K562 (cell line): ENCODE measurements at regions of chr2 and their contacts with region 1.

Region 1: GRCh38 chr2:54704688-54705605 is 18.5 kb upstream of the EML6 start:
- DNase-seq: peak in 2 of 4 experiments; percentile 10 to 60
- ATAC-seq: peak; percentile 86
- H3K4me3 ChIP-seq: no peak overlapping the region
- H3K27ac ChIP-seq: no peak overlapping the region
- H3K4me1 ChIP-seq: peaks cover 3 to 13% of the 10 kb centered on the region in 2 experiments; a peak in 3 of 5 replicates
- H3K27me3 ChIP-seq: peaks cover 18% of the 10 kb centered on the region in 2 experiments; a peak in 4 of 5 replicates
- CTCF ChIP-seq: peak in 2 of 3 experiments; percentile 40 to 72; a peak in 4 of 6 replicates
- EP300 ChIP-seq: no peak
- POLR2A ChIP-seq: no peak
- RAD21 ChIP-seq: peak; percentile 76 to 82

Region 2: GRCh38 chr2:54106631-54107454 is 598.1 kb before region 1 on chr2:
- CTCF ChIA-PET with region 1: no interaction called
- POLR2A ChIA-PET with region 1: no interaction called
- in situ Hi-C with region 1: loop called (anchors 10 kb)
- intact Hi-C with region 1: loop called (anchors 1 kb)
- DNase-seq: peak; percentile 17 to 65 (median 35)
- ATAC-seq: peak; percentile 90
- H3K4me3 ChIP-seq: no peak overlapping the region
- H3K27ac ChIP-seq: no peak overlapping the region
- H3K4me1 ChIP-seq: no peaks in the 10 kb centered on the region; a peak in 2 of 5 replicates
- H3K27me3 ChIP-seq: no peaks in the 10 kb centered on the region
- CTCF ChIP-seq: peak; percentile 70 to 79 (median 73)
- EP300 ChIP-seq: no peak
- POLR2A ChIP-seq: no peak
- RAD21 ChIP-seq: peak; percentile 71 to 77

Region 3: GRCh38 chr2:54115284-54116137 is 589.4 kb before region 1 on chr2 and contains the start of gene ACYP2:
- CTCF ChIA-PET with region 1: no interaction called
- POLR2A ChIA-PET with region 1: no interaction called
- in situ Hi-C with region 1: loop called (anchors 10 kb)
- intact Hi-C with region 1: no loop called
- DNase-seq: peak; percentile 96 to 97 (median 96)
- ATAC-seq: peak; percentile 96
- H3K4me3 ChIP-seq: peak within 1 kb of the TSS; percentile 70
- H3K27ac ChIP-seq: peak within 1 kb of the TSS; percentile 99
- H3K4me1 ChIP-seq: peaks cover 0 to 6% of the 10 kb centered on the region in 2 experiments; a peak in 1 of 5 replicates
- H3K27me3 ChIP-seq: no peaks in the 10 kb centered on the region
- CTCF ChIP-seq: peak in 1 of 3 experiments; percentile 24; a peak in 1 of 6 replicates
- EP300 ChIP-seq: peak; percentile 44; the same call in 1 of the 2 replicates
- POLR2A ChIP-seq: peak; percentile 98
- RAD21 ChIP-seq: peak; percentile 10 to 30; a peak in 3 of 4 replicates
- polyA plus RNA-seq, gene ACYP2: 1.9 to 2.2 TPM

Region 4: DNA sequence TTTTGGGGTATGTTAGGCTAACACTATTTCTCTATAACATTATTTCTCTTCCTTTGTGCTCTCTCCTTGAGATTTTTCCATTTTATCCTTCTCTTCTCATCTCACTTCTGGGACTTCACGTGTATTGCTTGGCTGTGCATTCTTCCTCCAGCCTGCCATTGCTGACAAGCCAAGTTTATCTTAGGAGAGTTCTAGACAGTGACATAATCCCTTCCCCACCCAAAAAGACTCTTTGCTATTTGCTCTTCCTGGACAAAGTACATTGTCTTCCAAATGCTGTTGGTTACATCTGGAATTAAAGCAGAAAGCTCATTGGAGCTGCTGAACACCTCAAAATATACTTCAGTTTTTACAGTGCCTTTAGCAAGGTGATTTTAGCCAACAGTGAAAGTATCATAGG is 457.8 kb before region 1 on chr2:
- CTCF ChIA-PET with region 1: no interaction called
- POLR2A ChIA-PET with region 1: no interaction called
- in situ Hi-C with region 1: no loop called
- intact Hi-C with region 1: no loop called
- DNase-seq: no peak
- ATAC-seq: no peak
- H3K4me3 ChIP-seq: no peak overlapping the region
- H3K27ac ChIP-seq: no peak overlapping the region
- H3K4me1 ChIP-seq: no peaks in the 10 kb centered on the region
- H3K27me3 ChIP-seq: no peaks in the 10 kb centered on the region
- CTCF ChIP-seq: no peak
- EP300 ChIP-seq: no peak
- POLR2A ChIP-seq: no peak
- RAD21 ChIP-seq: no peak

Region 5: GRCh38 chr2:54665436-54665856 is 39.5 kb before region 1 on chr2:
- CTCF ChIA-PET with region 1: interaction called, 3 read pairs
- POLR2A ChIA-PET with region 1: no interaction called
- in situ Hi-C with region 1: no loop called
- intact Hi-C with region 1: loop called (anchors 5 kb)
- DNase-seq: peak; percentile 31 to 76 (median 41)
- ATAC-seq: peak; percentile 93
- H3K4me3 ChIP-seq: no peak overlapping the region
- H3K27ac ChIP-seq: no peak overlapping the region
- H3K4me1 ChIP-seq: peaks cover 0 to 2% of the 10 kb centered on the region in 2 experiments; a peak in 1 of 5 replicates
- H3K27me3 ChIP-seq: no peaks in the 10 kb centered on the region
- CTCF ChIP-seq: peak; percentile 61 to 75 (median 75); a peak in 5 of 6 replicates
- EP300 ChIP-seq: no peak
- POLR2A ChIP-seq: no peak
- RAD21 ChIP-seq: peak; percentile 41 to 62